AG04449 (cell line): ENCODE measurements at regions of chr1 and their contacts with region 1.

Region 1: DNA sequence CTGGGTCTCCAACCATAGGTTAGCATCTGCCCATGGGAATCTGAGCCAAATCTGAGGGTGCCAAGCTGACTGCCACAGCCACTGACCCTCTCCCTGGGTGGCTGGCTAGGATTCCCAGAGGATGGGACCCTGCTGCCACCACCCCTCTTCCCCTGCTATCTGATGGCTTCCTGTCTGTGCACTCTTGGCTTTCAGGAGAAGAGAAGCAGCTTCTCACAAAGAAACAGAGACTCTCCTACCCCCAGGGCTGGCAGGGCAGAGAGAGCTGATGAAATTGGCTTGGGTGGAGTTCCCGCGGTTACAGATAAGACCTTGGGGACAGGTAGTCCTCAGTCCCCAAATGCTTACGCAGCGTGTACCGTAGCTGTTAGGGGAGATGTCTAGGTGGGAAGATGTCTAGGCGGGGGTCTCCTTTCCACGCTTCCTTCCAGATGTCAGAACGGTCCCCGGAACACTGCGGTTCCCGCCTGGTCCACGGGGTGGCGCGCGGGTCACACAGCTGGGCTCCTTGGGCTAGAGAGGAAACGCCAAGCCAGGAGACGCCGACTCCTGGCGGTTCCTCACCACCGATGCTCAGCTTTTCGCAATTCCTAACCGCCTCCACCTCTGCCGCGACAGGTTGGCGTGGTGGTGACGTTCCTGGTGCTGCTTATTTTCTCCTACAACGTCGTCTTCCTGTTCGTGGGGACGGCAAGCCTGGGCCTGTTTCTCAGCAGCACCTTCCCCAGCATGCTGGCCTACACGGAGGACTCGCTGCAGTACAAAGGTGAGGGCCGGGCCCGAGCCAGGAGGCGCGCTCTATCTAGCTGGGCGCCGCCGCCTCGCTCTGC is 40.1 kb downstream of the ELK4 start:
- DNase-seq: no peak
- H3K4me3 ChIP-seq: peak overlapping the region; percentile 52
- CTCF ChIP-seq: peak; percentile 100

Region 2: DNA sequence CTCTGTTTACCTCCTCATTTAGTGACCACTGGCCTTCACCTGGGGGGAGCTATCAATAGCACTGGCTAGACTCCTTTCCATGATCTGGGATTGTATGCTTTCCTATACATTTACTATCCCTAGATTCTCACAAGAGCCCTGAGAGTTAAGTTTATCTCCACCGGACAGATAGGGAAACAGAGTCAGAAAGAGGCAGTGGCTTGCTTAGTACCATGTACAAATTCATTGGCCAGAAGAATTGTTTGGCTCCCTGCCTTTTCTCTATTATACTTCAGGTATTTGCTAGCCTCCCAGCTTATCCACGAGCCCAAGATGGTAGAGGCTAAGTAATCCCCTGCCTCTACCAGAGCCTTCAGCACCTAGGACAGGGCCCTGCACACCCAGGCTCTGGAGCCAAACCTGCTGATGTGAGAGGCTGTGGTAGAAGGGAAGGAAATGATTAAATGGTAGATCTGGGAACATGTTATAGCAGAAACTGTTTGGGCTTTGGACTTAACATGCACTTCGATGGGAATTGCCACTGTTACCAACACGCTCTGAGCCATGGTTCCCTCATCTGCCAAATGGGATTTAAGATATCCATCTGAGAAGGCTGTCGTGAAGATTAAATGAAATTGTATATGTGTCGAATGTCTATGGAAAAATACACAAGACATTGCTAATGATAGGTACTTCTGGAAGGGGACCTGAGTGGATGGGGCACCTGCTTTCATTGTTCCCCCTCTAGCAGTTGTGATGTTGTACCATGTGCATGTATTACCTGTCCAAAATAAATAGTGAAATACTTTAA is 132.8 kb before region 1 on chr1:
- CTCF ChIA-PET with region 1: no interaction called
- POLR2A ChIA-PET with region 1: no interaction called
- DNase-seq: no peak
- H3K4me3 ChIP-seq: no peak overlapping the region
- CTCF ChIP-seq: no peak

Region 3: DNA sequence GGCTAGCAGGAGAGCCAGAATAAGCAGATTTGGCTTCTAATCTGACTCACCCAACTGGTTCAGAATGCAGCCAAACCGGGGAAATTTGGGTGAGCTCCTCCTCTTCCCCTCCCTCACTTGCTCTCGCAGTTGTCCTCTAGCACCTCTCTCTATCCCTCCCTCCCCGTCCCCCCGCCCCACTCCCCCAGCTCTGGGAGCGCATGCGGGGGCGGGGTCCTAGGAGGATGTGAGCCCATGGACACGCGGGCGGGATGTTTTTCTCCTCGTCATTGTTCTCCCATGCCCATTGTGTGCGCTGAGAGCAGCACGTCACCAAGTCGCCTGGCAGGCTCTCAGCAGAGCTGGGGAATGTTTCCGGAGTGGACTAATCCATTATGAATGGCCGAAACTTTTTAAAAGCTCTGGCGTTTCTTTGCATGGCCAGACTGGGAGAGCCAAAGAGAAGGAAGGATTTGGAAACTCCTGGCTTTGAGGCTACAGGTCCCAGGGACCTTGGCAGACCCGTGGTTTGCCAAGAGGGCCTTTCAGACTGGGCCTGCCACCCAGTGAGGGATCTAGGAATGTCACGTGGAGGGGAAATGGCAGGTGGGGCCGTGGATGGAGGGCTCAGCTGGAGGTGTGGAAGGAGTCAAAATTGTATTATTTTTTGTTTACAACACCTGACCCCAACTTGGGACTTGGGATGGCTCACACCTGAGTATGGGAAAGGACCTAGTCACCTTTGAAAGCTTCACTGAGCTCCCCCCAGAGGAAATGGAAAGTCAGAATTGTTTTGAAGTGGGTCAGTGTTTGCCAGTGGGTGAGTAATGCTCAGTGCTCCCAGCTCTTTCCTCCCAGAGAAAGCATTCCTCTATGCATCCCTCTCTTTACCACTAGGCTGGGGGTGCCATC is 48.1 kb before region 1 on chr1:
- CTCF ChIA-PET with region 1: interaction called, 17 read pairs
- POLR2A ChIA-PET with region 1: no interaction called
- DNase-seq: peak; percentile 21
- H3K4me3 ChIP-seq: peak overlapping the region; percentile 41
- CTCF ChIP-seq: no peak

Region 4: DNA sequence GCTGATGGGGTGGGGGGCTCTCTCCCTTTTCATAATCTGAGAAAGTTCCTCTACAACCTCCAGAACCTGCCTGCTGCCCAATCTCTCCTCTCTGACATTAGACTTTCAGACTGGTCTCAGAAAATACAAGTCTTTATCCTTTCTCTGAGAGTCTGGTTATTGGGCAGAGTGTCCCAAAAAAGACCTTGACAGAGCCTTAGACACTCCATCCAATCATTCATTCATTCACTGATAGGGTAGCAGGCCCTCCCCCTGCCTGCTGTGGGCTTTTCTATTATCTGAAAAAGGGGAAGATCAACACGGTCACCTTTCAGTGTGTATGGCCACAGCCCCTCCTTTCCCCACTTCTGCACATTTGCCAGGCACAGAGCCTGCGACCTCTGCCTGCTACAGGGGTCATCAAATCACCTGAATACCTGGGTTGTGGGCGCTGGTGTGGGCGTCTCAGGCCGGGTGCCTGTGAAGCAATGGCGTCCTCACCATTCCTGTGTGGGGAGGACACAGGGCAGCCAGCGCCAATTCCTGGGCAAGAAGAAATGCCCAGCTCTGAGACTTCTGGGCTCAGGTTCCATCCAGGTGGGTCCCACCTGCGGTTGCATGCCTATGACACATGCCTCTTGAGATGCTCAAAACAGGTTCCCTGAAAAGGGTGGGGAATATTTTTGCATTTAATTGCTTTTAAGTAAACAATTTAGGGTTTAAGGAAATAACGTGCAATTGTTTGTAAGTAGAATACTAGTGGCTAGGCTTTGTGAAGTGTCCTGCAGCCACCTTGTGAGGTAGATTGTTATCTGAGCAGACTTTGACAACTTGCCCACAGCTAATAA is 12.7 kb before region 1 on chr1:
- CTCF ChIA-PET with region 1: interaction called, 20 read pairs
- POLR2A ChIA-PET with region 1: no interaction called
- DNase-seq: no peak
- H3K4me3 ChIP-seq: no peak overlapping the region
- CTCF ChIP-seq: no peak

Region 5: GRCh38 chr1:205631727-205632373 is 40.1 kb after region 1 on chr1 and contains the start of gene ELK4:
- CTCF ChIA-PET with region 1: interaction called, 142 read pairs
- POLR2A ChIA-PET with region 1: interaction called, 5 read pairs
- DNase-seq: peak; percentile 85
- H3K4me3 ChIP-seq: peak within 1 kb of the TSS; percentile 74
- CTCF ChIP-seq: peak; percentile 78

Region 6: GRCh38 chr1:205680073-205680851 is 88.5 kb after region 1 on chr1 and contains the start of gene SLC45A3:
- CTCF ChIA-PET with region 1: interaction called, 17 read pairs
- POLR2A ChIA-PET with region 1: no interaction called
- DNase-seq: no peak
- H3K4me3 ChIP-seq: peak within 1 kb of the TSS; percentile 66
- CTCF ChIP-seq: no peak